ENCODE measurements at regions of chr19 and their contacts with region 1.

Region 1: GRCh38 chr19:46299004-46299509 is 2.2 kb downstream of the HIF3A start:
- DNase-seq: peak; percentile 96
- H3K4me3 Mint-ChIP-seq: peak overlapping the region; percentile 29
- H3K27ac Mint-ChIP-seq: peak overlapping the region; percentile 79
- H3K4me1 Mint-ChIP-seq: peaks cover 25% of the 10 kb centered on the region
- H3K27me3 Mint-ChIP-seq: no peaks in the 10 kb centered on the region
- CTCF ChIP-seq: no peak

Region 2: DNA sequence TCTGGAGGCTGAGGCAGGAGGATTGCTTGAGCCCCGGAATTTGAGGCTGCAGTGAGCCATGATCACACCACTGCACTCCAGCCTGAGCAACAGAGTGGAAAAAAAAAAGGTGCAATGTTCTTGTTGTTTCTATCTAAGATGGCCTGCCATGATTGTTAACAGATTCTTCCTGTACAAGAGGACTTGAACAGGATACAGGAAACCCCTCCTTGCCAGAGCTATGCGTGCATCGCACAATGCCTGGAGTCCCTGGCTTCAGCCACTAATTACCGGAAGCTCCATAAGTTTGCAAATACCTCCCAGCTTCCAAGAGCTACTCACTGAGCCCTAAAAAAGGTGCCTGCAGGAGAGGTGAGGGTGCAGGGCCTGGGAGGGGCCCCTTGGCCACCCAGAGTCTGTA is 15.3 kb before region 1 on chr19:
- CTCF ChIA-PET with region 1: interaction called, 11 read pairs
- POLR2A ChIA-PET with region 1: interaction called, 35 read pairs
- intact Hi-C with region 1: no loop called
- DNase-seq: no peak
- H3K4me3 Mint-ChIP-seq: no peak overlapping the region
- H3K27ac Mint-ChIP-seq: no peak overlapping the region
- H3K4me1 Mint-ChIP-seq: peaks cover 4% of the 10 kb centered on the region
- H3K27me3 Mint-ChIP-seq: no peaks in the 10 kb centered on the region
- CTCF ChIP-seq: no peak

Region 3: DNA sequence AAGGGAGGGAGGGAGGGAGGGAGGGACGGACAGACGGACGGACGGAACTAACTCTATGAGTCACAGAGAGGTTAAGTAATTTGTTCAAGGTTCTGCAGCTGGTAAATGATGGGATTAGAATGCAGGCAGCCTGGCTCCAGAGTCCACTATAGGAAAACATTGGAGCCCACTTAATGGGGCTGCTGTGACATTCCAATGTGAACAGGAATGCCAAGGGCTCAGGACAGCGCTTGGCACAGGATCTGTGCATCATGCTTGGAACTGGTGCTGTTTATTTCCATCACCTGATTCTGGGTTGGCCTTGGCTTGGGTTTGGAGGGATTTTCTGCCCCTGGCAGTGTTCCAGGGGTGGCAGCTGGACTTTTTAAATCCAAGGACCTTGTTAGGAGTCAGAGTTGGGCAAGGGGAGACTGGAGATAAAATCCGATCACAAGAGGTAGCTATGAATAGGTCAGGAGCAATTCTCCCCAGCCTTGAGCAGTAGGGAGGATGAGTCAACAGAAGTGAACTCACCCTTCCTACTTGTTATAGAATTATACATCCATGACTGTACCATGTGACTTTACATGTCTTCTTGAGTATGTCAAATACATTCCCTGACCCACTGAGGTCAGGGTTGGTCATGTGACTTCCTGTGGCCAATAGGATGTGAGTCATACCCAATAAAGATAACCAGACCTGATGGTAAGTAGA is 10.0 kb before region 1 on chr19:
- CTCF ChIA-PET with region 1: interaction called, 4 read pairs
- POLR2A ChIA-PET with region 1: interaction called, 35 read pairs
- intact Hi-C with region 1: no loop called
- DNase-seq: peak; percentile 92
- H3K4me3 Mint-ChIP-seq: peak overlapping the region; percentile 48
- H3K27ac Mint-ChIP-seq: peak overlapping the region; percentile 88
- H3K4me1 Mint-ChIP-seq: peaks cover 17% of the 10 kb centered on the region
- H3K27me3 Mint-ChIP-seq: no peaks in the 10 kb centered on the region
- CTCF ChIP-seq: no peak